B cell (primary cell): ENCODE measurements at regions of chr1 and their contacts with region 1.

Region 1: GRCh38 chr1:46132529-46133180 is at the start of gene PIK3R3:
- DNase-seq: peak; percentile 88
- ATAC-seq: peak; percentile 88
- H3K4me3 ChIP-seq: peak within 1 kb of the TSS; percentile 73 to 92 (median 77)
- H3K4me3 Mint-ChIP-seq: peak within 1 kb of the TSS; percentile 94
- H3K27ac ChIP-seq: peak within 1 kb of the TSS; percentile 30 to 40
- H3K27ac Mint-ChIP-seq: peak within 1 kb of the TSS; percentile 76
- H3K4me1 ChIP-seq: peaks cover 17 to 20% of the 10 kb centered on the region in 2 donors
- H3K4me1 Mint-ChIP-seq: peaks cover 23% of the 10 kb centered on the region
- H3K27me3 ChIP-seq: peaks cover 0 to 41% (median 24%) of the 10 kb centered on the region in 4 experiments
- H3K27me3 Mint-ChIP-seq: peaks cover 48% of the 10 kb centered on the region
- CTCF ChIP-seq: no peak
- total RNA-seq, gene PIK3R3: 0.17 and 0.78 TPM in 2 replicates

Region 2: GRCh38 chr1:44807262-44808062 is 1325.2 kb before region 1 on chr1 and contains the start of gene DYNLT4:
- CTCF ChIA-PET with region 1: no interaction called
- POLR2A ChIA-PET with region 1: no interaction called
- intact Hi-C with region 1: no loop called
- DNase-seq: peak; percentile 87
- ATAC-seq: peak; percentile 58
- H3K4me3 ChIP-seq: peak within 1 kb of the TSS in 1 of 5 experiments; percentile 10
- H3K4me3 Mint-ChIP-seq: peak within 1 kb of the TSS; percentile 66
- H3K27ac ChIP-seq: peak within 1 kb of the TSS; percentile 91 to 95
- H3K27ac Mint-ChIP-seq: peak within 1 kb of the TSS; percentile 99
- H3K4me1 ChIP-seq: peaks cover 44 to 59% of the 10 kb centered on the region in 2 donors
- H3K4me1 Mint-ChIP-seq: peaks cover 66% of the 10 kb centered on the region
- H3K27me3 ChIP-seq: no peaks in the 10 kb centered on the region
- H3K27me3 Mint-ChIP-seq: no peaks in the 10 kb centered on the region
- CTCF ChIP-seq: no peak
- total RNA-seq, gene DYNLT4: 0.39 TPM in 1 of 2 replicates, not detected in the other

Region 3: DNA sequence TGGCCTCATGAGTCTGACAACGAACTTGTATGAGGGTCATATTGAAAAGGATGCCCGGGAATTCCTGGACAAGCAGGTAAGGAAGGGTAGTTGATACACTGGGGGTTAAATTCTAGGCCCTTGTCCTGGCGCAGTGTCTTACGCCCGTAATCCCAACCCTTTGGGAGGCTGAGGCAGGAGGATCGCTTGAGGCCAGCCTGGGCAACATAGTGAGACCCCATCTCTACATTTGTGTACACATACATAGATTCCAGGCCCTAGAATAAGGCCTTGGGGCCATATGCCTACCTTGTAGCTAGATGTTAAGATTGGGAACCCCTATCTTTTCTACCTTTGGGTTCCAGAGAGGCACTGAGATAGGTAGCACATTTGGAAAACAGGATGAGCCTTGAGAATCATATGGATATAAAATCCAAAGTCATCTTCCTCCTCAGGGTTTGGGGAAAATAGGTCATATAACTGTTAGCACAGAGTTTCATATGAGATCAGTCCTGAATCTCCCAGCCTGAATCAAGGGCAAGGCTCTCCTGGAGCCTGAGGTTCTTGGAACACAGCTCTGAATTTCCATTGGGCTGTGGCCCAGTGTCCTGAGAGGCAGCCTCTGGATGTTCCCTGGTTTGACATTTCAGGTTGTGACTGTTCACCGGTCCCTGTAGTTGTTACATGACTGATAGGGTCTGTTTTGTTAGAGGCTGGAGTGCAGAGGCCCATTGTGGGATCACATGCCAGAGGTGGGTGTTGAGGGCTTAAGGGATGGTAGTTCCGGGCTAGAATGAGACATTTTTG is 104.7 kb before region 1 on chr1:
- CTCF ChIA-PET with region 1: no interaction called
- POLR2A ChIA-PET with region 1: no interaction called
- intact Hi-C with region 1: no loop called
- DNase-seq: no peak
- ATAC-seq: no peak
- H3K4me3 ChIP-seq: no peak overlapping the region
- H3K4me3 Mint-ChIP-seq: no peak overlapping the region
- H3K27ac ChIP-seq: no peak overlapping the region
- H3K27ac Mint-ChIP-seq: no peak overlapping the region
- H3K4me1 ChIP-seq: no peaks in the 10 kb centered on the region
- H3K4me1 Mint-ChIP-seq: no peaks in the 10 kb centered on the region
- H3K27me3 ChIP-seq: no peaks in the 10 kb centered on the region
- H3K27me3 Mint-ChIP-seq: no peaks in the 10 kb centered on the region
- CTCF ChIP-seq: no peak

Region 4: DNA sequence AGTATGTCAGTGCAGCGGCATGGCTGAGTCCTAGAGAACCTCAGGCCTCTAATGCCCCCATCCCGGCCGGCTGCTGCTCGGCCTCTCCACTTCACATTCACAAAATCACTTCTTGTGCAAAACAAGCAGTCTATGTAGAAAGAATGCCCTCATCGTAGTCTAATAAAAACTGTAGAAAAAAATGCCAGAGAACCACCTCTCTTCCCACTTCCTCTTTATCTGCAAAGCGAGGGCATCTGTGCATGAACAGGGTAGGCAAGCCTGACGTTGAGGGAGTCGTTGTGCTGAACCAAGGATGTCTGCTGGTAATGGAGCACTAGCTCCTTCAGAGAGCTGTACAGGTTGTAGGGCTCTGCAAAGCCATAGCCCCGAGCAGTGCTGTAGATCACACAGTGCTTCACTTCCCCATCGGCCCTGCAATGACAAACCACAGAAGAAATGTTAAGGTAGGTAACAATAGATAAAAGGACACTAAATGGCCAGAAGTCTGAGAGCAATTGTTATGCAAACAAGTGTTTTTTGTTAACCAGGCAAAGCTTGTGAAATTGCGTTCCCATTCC is 89.1 kb before region 1 on chr1:
- CTCF ChIA-PET with region 1: no interaction called
- POLR2A ChIA-PET with region 1: no interaction called
- intact Hi-C with region 1: loop called (anchors 1 kb)
- DNase-seq: peak; percentile 90
- ATAC-seq: peak; percentile 100
- H3K4me3 ChIP-seq: peak overlapping the region in 2 of 5 experiments; percentile 6 to 37
- H3K4me3 Mint-ChIP-seq: peak overlapping the region; percentile 65
- H3K27ac ChIP-seq: peak overlapping the region; percentile 36 to 38
- H3K27ac Mint-ChIP-seq: peak overlapping the region; percentile 71
- H3K4me1 ChIP-seq: peaks cover 36 to 37% of the 10 kb centered on the region in 2 donors
- H3K4me1 Mint-ChIP-seq: peaks cover 36% of the 10 kb centered on the region
- H3K27me3 ChIP-seq: no peaks in the 10 kb centered on the region
- H3K27me3 Mint-ChIP-seq: no peaks in the 10 kb centered on the region
- CTCF ChIP-seq: no peak

Region 5: GRCh38 chr1:46152016-46152415 is 19.4 kb after region 1 on chr1:
- CTCF ChIA-PET with region 1: no interaction called
- POLR2A ChIA-PET with region 1: no interaction called
- intact Hi-C with region 1: no loop called
- DNase-seq: no peak
- ATAC-seq: no peak
- H3K4me3 ChIP-seq: no peak overlapping the region
- H3K4me3 Mint-ChIP-seq: no peak overlapping the region
- H3K27ac ChIP-seq: no peak overlapping the region
- H3K27ac Mint-ChIP-seq: no peak overlapping the region
- H3K4me1 ChIP-seq: no peaks in the 10 kb centered on the region
- H3K4me1 Mint-ChIP-seq: no peaks in the 10 kb centered on the region
- H3K27me3 ChIP-seq: no peaks in the 10 kb centered on the region
- H3K27me3 Mint-ChIP-seq: peaks cover 3% of the 10 kb centered on the region
- CTCF ChIP-seq: no peak

Region 6: GRCh38 chr1:46197964-46198811 is 65.5 kb after region 1 on chr1 and contains the start of gene POMGNT1:
- CTCF ChIA-PET with region 1: no interaction called
- POLR2A ChIA-PET with region 1: no interaction called
- intact Hi-C with region 1: loop called (anchors 1 kb)
- DNase-seq: peak; percentile 81
- ATAC-seq: peak; percentile 98
- H3K4me3 ChIP-seq: peak within 1 kb of the TSS; percentile 74 to 80 (median 77)
- H3K4me3 Mint-ChIP-seq: peak within 1 kb of the TSS; percentile 88
- H3K27ac ChIP-seq: peak within 1 kb of the TSS; percentile 34 to 66
- H3K27ac Mint-ChIP-seq: peak within 1 kb of the TSS; percentile 70
- H3K4me1 ChIP-seq: peaks cover 19 to 28% of the 10 kb centered on the region in 2 donors
- H3K4me1 Mint-ChIP-seq: peaks cover 26% of the 10 kb centered on the region
- H3K27me3 ChIP-seq: peaks cover 0 to 9% (median 4%) of the 10 kb centered on the region in 4 experiments
- H3K27me3 Mint-ChIP-seq: peaks cover 6% of the 10 kb centered on the region
- CTCF ChIP-seq: no peak
- total RNA-seq, gene POMGNT1: 50.8 and 51.0 TPM in 2 replicates